ENCODE measurements at regions of chr4 and their contacts with region 1.

Region 1: GRCh38 chr4:142104041-142104684 is 467.8 kb downstream of the IL15 start:
- DNase-seq: no peak
- H3K4me3 ChIP-seq: no peak overlapping the region
- H3K27ac ChIP-seq: no peak overlapping the region
- H3K4me1 ChIP-seq: no peaks in the 10 kb centered on the region
- H3K27me3 ChIP-seq: no peaks in the 10 kb centered on the region
- CTCF ChIP-seq: no peak
- EP300 ChIP-seq: no peak
- POLR2A ChIP-seq: no peak

Region 2: GRCh38 chr4:142463206-142463605 is 359.0 kb after region 1 on chr4:
- intact Hi-C with region 1: loop called in 1 of 4 experiments (anchors 5 kb)
- DNase-seq: no peak
- H3K4me3 ChIP-seq: no peak overlapping the region
- H3K27ac ChIP-seq: no peak overlapping the region
- H3K4me1 ChIP-seq: no peaks in the 10 kb centered on the region
- H3K27me3 ChIP-seq: no peaks in the 10 kb centered on the region
- CTCF ChIP-seq: no peak
- EP300 ChIP-seq: no peak
- POLR2A ChIP-seq: no peak

Measured in ovary (tissue), 10 donors.